Heart left ventricle (tissue), 16 donors: ENCODE measurements at regions of chr18 and their contacts with region 1.

Region 1: GRCh38 chr18:48675352-48675761 is 136.5 kb downstream of the CTIF start:
- DNase-seq: peak; percentile 86 to 93 (median 89)
- ATAC-seq: peak; percentile 84 to 92 (median 90)
- H3K4me3 ChIP-seq: no peak overlapping the region
- H3K27ac ChIP-seq: peak overlapping the region in 2 of 12 donors; percentile 13 to 56
- H3K4me1 ChIP-seq: peaks cover 8 to 69% (median 55%) of the 10 kb centered on the region in 12 donors
- H3K27me3 ChIP-seq: no peaks in the 10 kb centered on the region
- CTCF ChIP-seq: peak; percentile 90 to 99 (median 95)
- POLR2A ChIP-seq: no peak

Region 2: GRCh38 chr18:48767090-48767690 is 91.8 kb after region 1 on chr18:
- intact Hi-C with region 1: loop called in 2 of 10 experiments (anchors 5 to 10 kb)
- DNase-seq: peak in 4 of 5 donors; percentile 63 to 77 (median 70)
- ATAC-seq: peak; percentile 86 to 92 (median 90)
- H3K4me3 ChIP-seq: no peak overlapping the region
- H3K27ac ChIP-seq: peak overlapping the region; percentile 12 to 95 (median 79)
- H3K4me1 ChIP-seq: peaks cover 0 to 93% (median 45%) of the 10 kb centered on the region in 12 donors
- H3K27me3 ChIP-seq: no peaks in the 10 kb centered on the region
- CTCF ChIP-seq: no peak
- POLR2A ChIP-seq: no peak

Region 3: GRCh38 chr18:48851599-48851960 is 176.2 kb after region 1 on chr18:
- intact Hi-C with region 1: no loop called
- DNase-seq: peak; percentile 79 to 83 (median 82)
- ATAC-seq: peak; percentile 52 to 83 (median 75)
- H3K4me3 ChIP-seq: peak overlapping the region in 3 of 12 donors; percentile 13 to 15 (median 14)
- H3K27ac ChIP-seq: peak overlapping the region; percentile 53 to 95 (median 88)
- H3K4me1 ChIP-seq: peaks cover 5 to 65% (median 43%) of the 10 kb centered on the region in 12 donors
- H3K27me3 ChIP-seq: no peaks in the 10 kb centered on the region
- CTCF ChIP-seq: no peak
- POLR2A ChIP-seq: no peak

Region 4: GRCh38 chr18:49041435-49042245 is 366.3 kb after region 1 on chr18:
- intact Hi-C with region 1: loop called (anchors 1 to 10 kb)
- DNase-seq: peak in 4 of 5 donors; percentile 40 to 64 (median 52)
- ATAC-seq: peak; percentile 58 to 81 (median 72)
- H3K4me3 ChIP-seq: no peak overlapping the region
- H3K27ac ChIP-seq: no peak overlapping the region
- H3K4me1 ChIP-seq: peaks cover 0 to 11% (median 0%) of the 10 kb centered on the region in 12 donors
- H3K27me3 ChIP-seq: no peaks in the 10 kb centered on the region
- CTCF ChIP-seq: peak; percentile 45 to 70 (median 61)
- POLR2A ChIP-seq: no peak

Region 5: DNA sequence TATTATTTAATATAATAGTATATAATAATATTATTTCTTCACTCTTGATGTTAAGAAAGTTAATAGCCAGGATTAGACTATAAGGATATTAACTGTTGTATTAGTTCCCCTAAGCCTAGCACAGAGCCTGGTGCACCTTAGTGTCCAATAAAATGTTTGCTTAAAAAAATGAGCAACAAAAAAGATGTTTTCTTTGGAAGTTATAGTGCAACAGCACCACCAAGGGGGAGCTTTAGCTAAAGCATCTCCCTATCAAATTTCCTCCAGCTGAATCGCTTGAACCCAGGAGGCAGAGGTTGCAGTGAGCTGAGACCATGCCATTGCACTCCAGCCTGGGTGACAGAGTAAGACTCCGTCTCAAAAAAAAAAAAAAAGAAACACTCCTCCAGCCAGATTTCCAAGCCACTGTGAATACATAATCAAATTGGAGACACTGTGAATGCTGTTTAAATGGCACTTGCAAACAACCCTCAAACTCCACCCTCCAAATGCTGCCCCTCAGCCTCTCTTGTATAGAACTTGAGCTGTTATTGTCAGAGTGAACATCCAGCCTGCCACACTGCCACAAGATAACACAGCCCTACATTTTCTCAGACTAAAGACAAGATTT is 563.2 kb after region 1 on chr18:
- intact Hi-C with region 1: loop called in 8 of 10 experiments (anchors 2 to 10 kb)
- DNase-seq: no peak
- ATAC-seq: no peak
- H3K4me3 ChIP-seq: no peak overlapping the region
- H3K27ac ChIP-seq: no peak overlapping the region
- H3K4me1 ChIP-seq: no peaks in the 10 kb centered on the region
- H3K27me3 ChIP-seq: no peaks in the 10 kb centered on the region
- CTCF ChIP-seq: peak in 11 of 12 donors; percentile 19 to 54 (median 40)
- POLR2A ChIP-seq: no peak

Region 6: GRCh38 chr18:49447810-49448745 is 772.7 kb after region 1 on chr18:
- intact Hi-C with region 1: loop called in 8 of 10 experiments (anchors 2 to 10 kb)
- DNase-seq: peak in 1 of 5 donors; percentile 20
- ATAC-seq: peak in 3 of 4 donors; percentile 78 to 87 (median 82)
- H3K4me3 ChIP-seq: no peak overlapping the region
- H3K27ac ChIP-seq: no peak overlapping the region
- H3K4me1 ChIP-seq: peaks cover 0 to 4% (median 0%) of the 10 kb centered on the region in 12 donors
- H3K27me3 ChIP-seq: no peaks in the 10 kb centered on the region
- CTCF ChIP-seq: peak; percentile 30 to 65 (median 52)
- POLR2A ChIP-seq: no peak

Region 7: GRCh38 chr18:49858309-49859020 is 1183.1 kb after region 1 on chr18:
- intact Hi-C with region 1: loop called in 1 of 10 experiments (anchors 5 kb)
- DNase-seq: peak in 4 of 5 donors; percentile 48 to 82 (median 56)
- ATAC-seq: peak; percentile 45 to 79 (median 57)
- H3K4me3 ChIP-seq: no peak overlapping the region
- H3K27ac ChIP-seq: no peak overlapping the region
- H3K4me1 ChIP-seq: peaks cover 0 to 5% (median 0%) of the 10 kb centered on the region in 12 donors
- H3K27me3 ChIP-seq: peaks cover 0 to 4% (median 0%) of the 10 kb centered on the region in 9 donors
- CTCF ChIP-seq: peak; percentile 75 to 96 (median 90)
- POLR2A ChIP-seq: no peak